ENCODE measurements at regions of chr11 and their contacts with region 1.

Region 1: DNA sequence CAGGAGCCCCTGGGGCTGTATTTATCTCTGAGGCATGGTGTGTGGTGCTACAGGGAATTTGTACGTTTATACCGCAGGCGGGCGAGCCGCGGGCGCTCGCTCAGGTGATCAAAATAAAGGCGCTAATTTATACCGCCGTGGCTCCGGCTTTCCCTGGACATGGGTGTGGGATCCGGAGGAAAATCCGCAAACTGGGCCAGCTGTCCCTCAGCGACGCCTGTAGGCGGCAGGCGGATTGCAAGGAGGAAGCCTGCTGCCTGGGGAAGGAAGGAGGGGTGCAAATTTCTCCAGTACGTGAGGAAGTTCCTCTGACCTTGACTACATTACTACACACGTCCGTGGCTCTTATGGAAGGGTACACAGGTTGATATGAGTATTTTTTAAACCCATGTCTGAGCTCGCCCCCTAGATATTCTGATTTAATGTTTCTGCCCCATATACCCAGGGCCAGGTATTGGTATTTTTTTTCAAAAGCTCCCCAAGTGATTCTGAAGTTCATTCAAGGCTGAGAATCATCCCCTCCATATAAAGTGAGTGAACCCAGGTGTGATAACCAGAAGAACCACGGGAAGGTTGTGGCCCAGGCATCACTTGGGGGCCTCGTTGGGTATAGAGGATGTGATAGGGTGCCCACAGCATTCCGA is 2.8 kb downstream of the MYOD1 start:
- DNase-seq: no peak

Region 2: DNA sequence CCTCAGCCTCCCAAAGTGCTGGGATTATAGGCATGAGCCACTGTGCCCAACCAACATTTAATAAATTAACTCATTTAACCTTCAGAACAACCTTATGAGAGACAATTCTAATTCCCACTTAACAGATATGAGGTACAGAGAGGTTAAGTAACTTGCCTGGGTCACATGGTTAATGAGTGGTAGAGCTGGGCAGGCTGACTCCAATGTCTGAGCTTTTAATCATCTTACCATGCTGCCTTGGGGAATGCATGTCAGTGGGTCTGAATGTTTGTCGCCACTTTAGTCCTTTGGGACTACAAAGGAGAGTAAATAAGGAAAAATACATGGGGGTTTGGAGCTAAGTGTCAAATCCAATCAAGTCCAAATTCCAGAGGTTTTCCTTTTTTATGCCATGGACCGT is 503.1 kb before region 1 on chr11:
- intact Hi-C with region 1: loop called in 1 of 2 experiments (anchors 5 kb)
- DNase-seq: no peak

Measured in posterior vena cava (tissue), 2 donors.